Calu3 (cell line): ENCODE measurements at regions of chr20 and their contacts with region 1.

Region 1: DNA sequence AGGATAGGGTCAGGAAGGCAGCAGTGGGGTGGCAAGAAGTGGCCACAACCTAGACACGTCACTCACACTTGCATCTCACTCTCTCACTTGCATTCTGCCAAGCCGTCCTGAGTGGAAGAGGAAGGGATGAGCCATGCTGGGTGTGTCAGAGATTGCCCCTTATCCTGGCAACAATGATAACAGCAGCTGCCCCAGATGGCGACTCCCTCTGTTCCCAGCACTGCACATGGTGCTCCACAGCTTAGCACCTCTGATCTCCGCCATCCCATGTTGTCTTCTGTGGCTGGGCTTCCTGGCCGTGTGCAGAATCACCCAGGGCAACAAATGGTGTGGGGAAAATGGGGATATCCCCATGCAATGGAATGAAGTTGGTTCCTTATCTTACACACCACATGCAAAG is 11.1 kb downstream of the KCNB1 start:
- DNase-seq: no peak
- H3K4me3 Mint-ChIP-seq: no peak overlapping the region
- H3K27ac Mint-ChIP-seq: no peak overlapping the region
- H3K4me1 Mint-ChIP-seq: no peaks in the 10 kb centered on the region
- H3K27me3 Mint-ChIP-seq: peaks cover 97% of the 10 kb centered on the region
- CTCF ChIP-seq: no peak

Region 2: GRCh38 chr20:49490702-49491110 is 19.3 kb after region 1 on chr20:
- CTCF ChIA-PET with region 1: interaction called, 10 read pairs
- intact Hi-C with region 1: no loop called
- DNase-seq: no peak
- H3K4me3 Mint-ChIP-seq: no peak overlapping the region
- H3K27ac Mint-ChIP-seq: no peak overlapping the region
- H3K4me1 Mint-ChIP-seq: no peaks in the 10 kb centered on the region
- H3K27me3 Mint-ChIP-seq: peaks cover 67% of the 10 kb centered on the region
- CTCF ChIP-seq: no peak